ENCODE measurements at regions of chr7 and their contacts with region 1.

Region 1: GRCh38 chr7:85471740-85472139 is 284.9 kb upstream of the SEMA3D start:
- DNase-seq: no peak
- H3K4me3 ChIP-seq: no peak overlapping the region
- H3K27ac ChIP-seq: no peak overlapping the region
- H3K4me1 ChIP-seq: no peaks in the 10 kb centered on the region
- H3K27me3 ChIP-seq: no peaks in the 10 kb centered on the region
- CTCF ChIP-seq: no peak

Region 2: DNA sequence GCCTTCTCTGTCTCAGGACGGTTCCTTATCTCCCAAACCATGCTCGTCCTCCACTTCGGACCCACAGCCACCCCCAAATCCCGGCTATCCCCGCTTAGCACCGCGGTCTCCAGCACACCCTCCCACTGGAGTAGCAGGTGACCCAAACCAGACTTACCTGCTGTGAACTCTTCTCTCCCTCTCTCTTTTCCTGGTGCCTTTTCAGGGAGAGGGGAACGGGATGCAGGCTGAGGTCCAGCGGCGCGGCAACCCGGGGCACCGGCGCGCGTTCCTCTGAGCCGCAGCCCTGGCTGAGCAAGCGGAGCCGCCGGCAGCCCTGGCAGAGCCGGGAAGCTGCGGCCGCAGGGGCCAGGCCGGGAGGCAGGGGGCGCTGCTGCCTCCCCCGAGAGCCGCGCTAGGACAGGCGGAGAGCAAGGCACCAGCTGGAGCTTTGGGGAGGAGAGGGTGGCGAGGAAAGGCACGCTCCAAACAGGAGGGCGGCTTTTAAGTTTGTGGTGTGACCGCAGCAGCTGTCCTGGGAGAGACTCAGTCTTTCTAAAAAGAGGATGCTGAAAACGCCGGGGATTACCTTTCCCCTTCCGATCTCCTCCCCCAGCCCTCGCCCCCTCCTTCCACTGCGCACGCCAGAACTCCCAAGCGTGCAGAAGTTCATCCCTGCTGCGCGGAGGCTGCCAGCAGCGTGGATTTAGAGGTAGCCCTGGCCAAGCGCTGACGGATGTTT is 285.1 kb before region 1 on chr7 and contains the start of gene SEMA3D:
- CTCF ChIA-PET with region 1: no interaction called
- POLR2A ChIA-PET with region 1: no interaction called
- intact Hi-C with region 1: loop called (anchors 5 kb)
- DNase-seq: peak; percentile 34 to 85
- H3K4me3 ChIP-seq: peak within 1 kb of the TSS; percentile 63
- H3K27ac ChIP-seq: no peak within 1 kb of the TSS
- H3K4me1 ChIP-seq: no peaks in the 10 kb centered on the region
- H3K27me3 ChIP-seq: peaks cover 13% of the 10 kb centered on the region; the same call in 1 of the 2 replicates
- CTCF ChIP-seq: peak; percentile 74
- total RNA-seq, gene SEMA3D: 2.6 and 4.8 TPM in 2 replicates

Region 3: GRCh38 chr7:85423209-85423895 is 48.4 kb before region 1 on chr7:
- CTCF ChIA-PET with region 1: interaction called, 11 read pairs
- POLR2A ChIA-PET with region 1: no interaction called
- intact Hi-C with region 1: no loop called
- DNase-seq: no peak
- H3K4me3 ChIP-seq: no peak overlapping the region
- H3K27ac ChIP-seq: no peak overlapping the region
- H3K4me1 ChIP-seq: no peaks in the 10 kb centered on the region
- H3K27me3 ChIP-seq: no peaks in the 10 kb centered on the region
- CTCF ChIP-seq: no peak